Sigmoid colon (tissue), 7 donors: ENCODE measurements at regions of chr4 and their contacts with region 1.

Region 1: DNA sequence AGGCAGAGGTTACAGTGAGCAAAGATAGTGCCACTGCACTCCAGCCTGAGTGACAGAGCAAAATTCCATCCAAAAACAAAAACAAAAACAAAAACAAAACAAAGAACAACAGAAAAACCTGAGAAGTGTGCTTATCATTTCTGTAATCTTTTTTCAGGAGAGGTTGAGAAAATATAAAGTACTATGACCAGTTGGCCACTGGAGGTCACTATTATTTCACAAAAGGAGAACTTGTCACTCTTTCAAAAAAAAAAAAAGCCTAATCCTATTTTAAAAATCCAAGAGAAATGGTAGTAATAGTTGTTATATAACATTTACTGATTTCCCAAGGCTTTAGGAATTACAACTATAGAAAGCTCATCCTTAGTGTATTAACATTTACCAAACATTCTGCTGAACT is 24.9 kb upstream of the RNF150 start:
- DNase-seq: no peak
- H3K4me3 ChIP-seq: no peak overlapping the region
- H3K27ac ChIP-seq: no peak overlapping the region
- H3K4me1 ChIP-seq: peaks cover 0 to 16% (median 13%) of the 10 kb centered on the region in 4 donors
- H3K27me3 ChIP-seq: no peaks in the 10 kb centered on the region
- CTCF ChIP-seq: peak; percentile 5 to 49 (median 16)
- EP300 ChIP-seq: no peak
- POLR2A ChIP-seq: no peak

Region 2: DNA sequence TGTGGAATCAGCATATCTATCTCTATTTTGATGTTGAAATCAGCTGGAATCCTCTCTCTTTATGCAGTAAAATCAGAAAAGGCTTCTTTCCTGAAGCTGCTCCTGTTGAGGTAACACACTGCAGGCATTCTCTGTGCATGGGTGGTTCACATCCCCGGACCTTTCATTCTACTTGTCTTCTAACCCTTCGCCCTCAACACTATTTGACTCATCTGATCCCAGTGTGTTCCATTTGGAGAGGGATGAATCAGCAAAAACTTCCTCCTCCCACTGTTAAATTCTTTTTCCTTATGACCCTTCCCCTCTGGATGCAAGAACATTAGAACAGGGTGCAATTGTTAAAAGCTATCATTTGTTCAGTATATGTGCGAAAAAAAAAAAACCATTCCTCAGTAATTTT is 92.3 kb before region 1 on chr4:
- intact Hi-C with region 1: no loop called
- DNase-seq: no peak
- H3K4me3 ChIP-seq: no peak overlapping the region
- H3K27ac ChIP-seq: no peak overlapping the region
- H3K4me1 ChIP-seq: peaks cover 0 to 21% (median 2%) of the 10 kb centered on the region in 4 donors
- H3K27me3 ChIP-seq: no peaks in the 10 kb centered on the region
- CTCF ChIP-seq: no peak
- EP300 ChIP-seq: no peak
- POLR2A ChIP-seq: no peak

Region 3: DNA sequence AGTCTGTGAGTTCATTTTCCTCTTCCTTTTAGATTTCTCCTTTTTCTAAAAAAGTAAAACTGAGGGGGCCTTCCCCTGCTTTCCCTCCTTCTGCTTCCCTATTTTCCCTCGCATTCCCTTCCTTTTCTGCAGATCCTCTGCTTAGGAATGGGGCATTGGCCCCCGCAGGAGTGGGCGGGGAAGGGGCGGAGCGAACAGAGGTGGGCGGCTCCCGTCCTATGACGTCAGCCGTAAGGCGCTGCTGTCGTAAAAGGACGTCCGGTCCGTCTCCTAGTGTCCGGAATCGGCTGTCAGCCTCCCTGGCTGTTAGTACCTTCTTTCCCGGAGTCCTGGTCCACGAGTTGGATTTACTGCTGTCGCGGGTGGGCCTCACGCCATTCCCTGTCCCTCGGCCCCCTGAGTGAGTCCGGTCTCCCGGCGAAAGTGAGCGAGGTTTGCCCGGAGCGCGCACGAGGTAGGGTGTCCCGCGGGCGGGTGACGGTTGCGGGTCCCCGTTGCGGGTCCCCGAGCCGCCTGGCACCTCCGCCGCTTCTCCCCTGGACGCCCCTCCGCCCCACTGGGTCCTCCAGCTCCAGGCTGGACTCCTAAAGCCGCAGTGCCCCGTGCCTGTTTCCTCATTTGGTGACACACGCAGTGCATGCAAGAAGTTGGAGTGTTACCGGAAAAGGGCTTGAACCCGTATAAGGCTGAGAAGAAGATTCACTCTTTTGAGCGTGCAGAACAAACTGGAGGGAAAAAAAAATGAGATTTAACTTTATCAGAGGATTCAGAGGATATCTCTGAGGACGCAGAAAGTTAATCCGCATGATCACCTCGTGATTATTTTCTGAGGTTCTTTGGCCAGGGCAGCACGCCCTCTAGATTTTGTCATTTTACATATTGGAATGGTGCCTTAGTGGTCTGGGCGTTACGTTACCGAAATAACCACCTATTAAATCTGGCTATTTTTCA is 62.7 kb after region 1 on chr4 and contains the start of gene ZNF330:
- intact Hi-C with region 1: loop called (anchors 5 kb)
- DNase-seq: peak; percentile 95
- H3K4me3 ChIP-seq: peak within 1 kb of the TSS; percentile 79 to 97 (median 94)
- H3K27ac ChIP-seq: peak within 1 kb of the TSS; percentile 96 to 100 (median 98)
- H3K4me1 ChIP-seq: peaks cover 0 to 40% (median 21%) of the 10 kb centered on the region in 4 donors
- H3K27me3 ChIP-seq: no peaks in the 10 kb centered on the region
- CTCF ChIP-seq: no peak
- EP300 ChIP-seq: peak in 1 of 4 donors; percentile 61
- POLR2A ChIP-seq: peak; percentile 85 to 93
- total RNA-seq, gene ZNF330: 32.6 to 48.2 (median 35.9) TPM

Region 4: DNA sequence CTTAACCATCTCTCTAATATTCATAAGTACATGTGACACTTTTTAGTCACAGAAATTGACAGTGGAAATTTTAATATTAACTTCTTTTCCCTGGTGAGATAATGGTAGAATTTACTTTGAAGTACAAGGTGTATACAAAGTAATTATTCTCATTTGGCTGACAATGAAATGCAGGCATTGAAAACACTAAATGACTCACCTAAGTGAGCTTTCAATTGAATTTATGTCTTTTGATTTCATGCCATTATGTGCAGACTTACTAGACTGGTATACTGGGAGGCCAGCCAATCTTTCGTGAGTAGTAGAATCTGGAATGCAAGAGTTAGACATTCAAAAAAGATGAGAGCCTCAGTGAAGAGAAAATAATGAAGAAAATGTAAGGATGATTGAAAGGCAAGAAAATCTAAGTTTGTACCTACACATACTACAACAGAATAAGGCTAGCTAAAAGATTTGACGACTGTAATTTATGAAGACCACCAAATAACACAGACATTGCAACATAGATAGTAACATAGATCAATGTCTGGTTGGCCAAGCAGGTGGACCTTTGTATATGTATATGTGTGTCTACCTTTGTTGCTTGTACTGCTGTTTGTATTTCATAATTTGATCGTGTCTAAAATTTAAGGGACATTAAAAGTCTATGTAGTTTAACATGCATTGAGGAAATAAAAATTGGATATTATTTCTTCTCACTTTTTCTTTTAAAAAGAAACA is 937.8 kb after region 1 on chr4:
- intact Hi-C with region 1: loop called (anchors 10 kb)
- DNase-seq: peak; percentile 75
- H3K4me3 ChIP-seq: no peak overlapping the region
- H3K27ac ChIP-seq: peak overlapping the region in 3 of 4 donors; percentile 28 to 66 (median 66)
- H3K4me1 ChIP-seq: peaks cover 0 to 47% (median 14%) of the 10 kb centered on the region in 4 donors
- H3K27me3 ChIP-seq: no peaks in the 10 kb centered on the region
- CTCF ChIP-seq: no peak
- EP300 ChIP-seq: peak in 3 of 4 donors; percentile 62 to 80 (median 80)
- POLR2A ChIP-seq: no peak

Region 5: GRCh38 chr4:142120921-142121320 is 962.7 kb after region 1 on chr4:
- intact Hi-C with region 1: no loop called
- DNase-seq: no peak
- H3K4me3 ChIP-seq: no peak overlapping the region
- H3K27ac ChIP-seq: no peak overlapping the region
- H3K4me1 ChIP-seq: no peaks in the 10 kb centered on the region
- H3K27me3 ChIP-seq: no peaks in the 10 kb centered on the region
- CTCF ChIP-seq: no peak
- EP300 ChIP-seq: no peak
- POLR2A ChIP-seq: no peak